SK-N-SH (cell line): ENCODE measurements at regions of chr2 and their contacts with region 1.

Region 1: DNA sequence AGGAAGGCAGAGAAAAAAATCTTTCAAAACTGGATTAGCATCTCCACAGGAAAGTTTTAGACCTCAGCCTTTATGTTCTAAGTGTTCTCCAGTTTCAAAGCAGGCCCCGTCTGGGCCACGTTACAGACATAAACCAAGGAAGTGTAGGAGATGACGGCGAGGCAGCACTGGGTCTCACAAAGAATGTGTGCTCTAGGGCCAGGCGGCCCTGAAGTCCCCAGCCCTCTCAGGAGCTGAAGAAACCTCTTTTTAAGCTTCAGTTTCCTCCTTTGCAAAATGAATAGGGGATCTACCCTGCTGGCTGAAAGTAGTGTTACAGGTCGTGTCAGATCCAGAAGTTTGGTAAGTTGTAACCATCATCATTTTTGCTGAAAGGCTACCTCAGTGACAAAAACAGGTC is 81.7 kb downstream of the SPRED2 start:
- DNase-seq: no peak
- H3K4me3 ChIP-seq: no peak overlapping the region
- H3K27ac ChIP-seq: peak overlapping the region; percentile 22 to 90; a peak in 3 of 4 replicates
- H3K4me1 ChIP-seq: peaks cover 34 to 40% of the 10 kb centered on the region in 2 experiments
- H3K27me3 ChIP-seq: no peaks in the 10 kb centered on the region
- CTCF ChIP-seq: peak; percentile 35; the same call in 1 of the 2 replicates
- EP300 ChIP-seq: no peak
- RAD21 ChIP-seq: no peak

Region 2: GRCh38 chr2:65193446-65193845 is 157.2 kb before region 1 on chr2:
- CTCF ChIA-PET with region 1: no interaction called
- POLR2A ChIA-PET with region 1: no interaction called
- DNase-seq: no peak
- H3K4me3 ChIP-seq: no peak overlapping the region
- H3K27ac ChIP-seq: no peak overlapping the region
- H3K4me1 ChIP-seq: peaks cover 0 to 3% of the 10 kb centered on the region in 2 experiments; a peak in 2 of 4 replicates
- H3K27me3 ChIP-seq: no peaks in the 10 kb centered on the region
- CTCF ChIP-seq: no peak
- EP300 ChIP-seq: no peak
- RAD21 ChIP-seq: no peak

Region 3: DNA sequence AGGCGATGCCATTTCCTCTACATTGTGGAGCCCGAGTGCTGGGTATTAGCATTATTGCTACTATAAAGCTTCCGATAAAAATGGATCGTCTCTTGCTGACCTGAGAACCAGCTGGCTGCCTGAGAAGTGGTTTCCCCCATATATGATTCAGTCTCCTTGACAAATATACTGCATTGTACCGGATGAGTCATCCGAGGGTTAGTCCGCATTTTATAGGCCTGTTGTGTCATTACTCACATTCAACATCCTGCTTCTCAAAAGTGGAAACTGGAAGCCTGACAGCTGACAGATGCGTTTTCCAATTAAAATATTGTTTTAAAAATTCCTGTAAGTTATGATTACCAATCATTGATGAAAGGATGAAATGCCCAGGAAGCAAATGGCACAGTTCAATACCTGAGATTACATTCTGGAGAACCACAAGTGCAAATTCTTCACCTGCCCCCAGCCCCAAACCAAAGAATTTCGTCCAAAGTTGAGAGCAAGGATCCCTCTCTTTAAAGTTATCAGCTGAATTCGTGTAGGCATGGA is 16.0 kb after region 1 on chr2:
- CTCF ChIA-PET with region 1: interaction called, 13 read pairs
- POLR2A ChIA-PET with region 1: interaction called, 4 read pairs
- DNase-seq: no peak
- H3K4me3 ChIP-seq: peak overlapping the region; percentile 10 to 51; a peak in 3 of 4 replicates
- H3K27ac ChIP-seq: peak overlapping the region; percentile 74 to 95
- H3K4me1 ChIP-seq: peaks cover 51 to 54% of the 10 kb centered on the region in 2 experiments
- H3K27me3 ChIP-seq: no peaks in the 10 kb centered on the region
- CTCF ChIP-seq: no peak
- EP300 ChIP-seq: peak in 1 of 2 experiments; percentile 81; a peak in 1 of 4 replicates
- RAD21 ChIP-seq: no peak